Activated CD4-positive, alpha-beta memory T cell treated with anti-CD3 and anti-CD28 coated beads, Interleukin-2, amount 10 ng/mL, durations not matched to agents 7 days and 5 days (primary cell): ENCODE measurements at regions of chr1 and their contacts with region 1.

Region 1: DNA sequence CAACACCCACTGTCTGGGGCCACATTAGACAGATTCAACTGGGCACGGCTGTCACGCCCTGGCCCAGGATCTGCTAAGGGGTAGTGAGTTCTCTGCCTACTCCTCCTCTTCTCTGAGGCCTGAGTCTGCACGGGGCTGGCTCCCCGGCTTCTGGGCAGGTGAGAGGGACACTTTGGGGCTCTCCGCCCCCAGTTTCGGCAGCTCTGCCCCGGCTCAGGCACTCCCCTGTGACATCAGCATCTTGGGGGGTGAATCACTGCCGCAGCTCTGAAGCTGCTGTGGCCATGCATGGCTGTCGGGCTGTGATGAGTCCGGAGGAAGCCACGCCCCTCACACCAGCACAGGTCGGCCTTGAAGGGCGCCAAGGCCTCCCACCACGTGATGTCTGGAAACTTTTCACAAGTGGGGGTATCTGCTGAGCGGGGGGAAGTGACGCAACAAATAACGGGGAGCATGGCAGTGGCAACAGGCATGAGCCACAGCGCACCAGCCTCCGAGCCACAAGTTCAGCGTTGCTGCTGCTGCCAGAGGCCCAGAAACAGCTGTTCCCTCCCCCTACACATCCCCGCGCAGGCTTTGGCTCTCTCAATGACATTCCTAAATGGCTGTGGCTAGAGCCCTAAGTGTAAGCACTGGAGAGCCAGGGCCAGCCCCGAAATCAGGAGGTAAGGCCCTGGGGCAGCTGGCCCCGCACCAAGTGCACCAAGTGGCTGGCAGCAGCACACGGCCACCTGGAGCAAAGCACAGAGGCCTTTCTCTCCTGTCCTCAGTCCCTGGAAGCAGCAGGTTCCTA is 26.3 kb downstream of the ZBTB17 start:
- DNase-seq: peak; percentile 92
- H3K4me3 Mint-ChIP-seq: peak overlapping the region; percentile 48
- H3K27ac Mint-ChIP-seq: peak overlapping the region; percentile 88
- H3K4me1 Mint-ChIP-seq: peaks cover 71% of the 10 kb centered on the region
- H3K27me3 Mint-ChIP-seq: no peaks in the 10 kb centered on the region

Region 2: DNA sequence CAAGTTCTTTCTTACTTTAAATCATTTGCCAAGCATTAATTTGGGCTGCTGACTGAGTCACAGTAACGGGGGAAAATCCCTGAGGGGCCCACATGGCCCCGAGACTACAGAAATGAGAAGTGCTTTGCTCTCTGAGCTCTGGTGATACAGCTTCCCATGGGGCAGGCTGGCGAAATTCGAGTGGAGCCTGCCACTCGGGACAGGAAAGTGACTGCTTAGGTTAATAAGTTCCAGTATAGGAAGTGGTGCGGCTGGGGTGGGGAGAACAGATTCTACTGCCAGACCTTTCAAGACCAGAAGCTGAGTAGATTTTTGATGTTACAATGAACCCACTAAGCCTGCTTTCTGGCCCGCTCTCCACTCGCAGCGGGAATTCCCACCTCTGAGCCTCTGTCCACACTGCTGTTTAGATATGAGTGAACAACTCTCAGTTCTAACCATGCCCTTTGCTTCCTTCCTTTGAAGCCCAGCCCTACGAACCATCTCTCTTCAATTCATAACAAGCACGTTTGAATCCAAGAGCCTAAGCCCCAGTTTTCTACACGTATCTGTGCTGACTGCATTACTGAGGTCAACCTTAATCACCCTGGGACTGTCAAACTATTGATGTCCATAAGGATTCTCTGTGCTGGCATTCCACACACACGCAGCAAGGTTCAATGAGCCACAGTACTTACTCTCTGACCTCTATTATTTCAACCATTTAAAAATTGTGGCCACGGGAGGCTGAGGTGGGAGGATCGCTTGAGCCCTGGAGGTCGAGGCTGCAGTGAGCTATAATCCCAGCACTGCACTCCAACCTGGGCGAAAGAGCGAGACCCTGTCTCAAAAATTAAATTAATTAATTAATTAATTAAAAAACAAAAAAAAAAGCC is 16.7 kb after region 1 on chr1:
- CTCF ChIA-PET with region 1: no interaction called
- POLR2A ChIA-PET with region 1: interaction called, 31 read pairs
- DNase-seq: peak; percentile 77
- H3K4me3 Mint-ChIP-seq: peak overlapping the region; percentile 64
- H3K27ac Mint-ChIP-seq: peak overlapping the region; percentile 80
- H3K4me1 Mint-ChIP-seq: peaks cover 56% of the 10 kb centered on the region
- H3K27me3 Mint-ChIP-seq: no peaks in the 10 kb centered on the region

Region 3: GRCh38 chr1:15975805-15976680 is 26.4 kb after region 1 on chr1 and contains the start of gene ZBTB17:
- CTCF ChIA-PET with region 1: interaction called, 3 read pairs
- POLR2A ChIA-PET with region 1: interaction called, 12 read pairs
- DNase-seq: peak; percentile 95
- H3K4me3 Mint-ChIP-seq: peak within 1 kb of the TSS; percentile 88
- H3K27ac Mint-ChIP-seq: peak within 1 kb of the TSS; percentile 76
- H3K4me1 Mint-ChIP-seq: peaks cover 36% of the 10 kb centered on the region
- H3K27me3 Mint-ChIP-seq: no peaks in the 10 kb centered on the region
- total RNA-seq, gene ZBTB17: 43.8 to 48.0 TPM

Region 4: GRCh38 chr1:16127676-16128337 is 178.2 kb after region 1 on chr1:
- CTCF ChIA-PET with region 1: no interaction called
- POLR2A ChIA-PET with region 1: no interaction called
- DNase-seq: no peak
- H3K4me3 Mint-ChIP-seq: no peak overlapping the region
- H3K27ac Mint-ChIP-seq: no peak overlapping the region
- H3K4me1 Mint-ChIP-seq: peaks cover 7% of the 10 kb centered on the region
- H3K27me3 Mint-ChIP-seq: no peaks in the 10 kb centered on the region